Panc1 (cell line): ENCODE measurements at regions of chr1 and their contacts with region 1.

Region 1: GRCh38 chr1:242426271-242426905 is 98.1 kb downstream of the PLD5 start:
- DNase-seq: no peak
- ATAC-seq: no peak
- H3K4me3 ChIP-seq: no peak overlapping the region
- H3K27ac ChIP-seq: no peak overlapping the region
- H3K4me1 ChIP-seq: no peaks in the 10 kb centered on the region
- H3K27me3 ChIP-seq: no peaks in the 10 kb centered on the region
- CTCF ChIP-seq: peak; percentile 29; the same call in 1 of the 2 replicates

Region 2: DNA sequence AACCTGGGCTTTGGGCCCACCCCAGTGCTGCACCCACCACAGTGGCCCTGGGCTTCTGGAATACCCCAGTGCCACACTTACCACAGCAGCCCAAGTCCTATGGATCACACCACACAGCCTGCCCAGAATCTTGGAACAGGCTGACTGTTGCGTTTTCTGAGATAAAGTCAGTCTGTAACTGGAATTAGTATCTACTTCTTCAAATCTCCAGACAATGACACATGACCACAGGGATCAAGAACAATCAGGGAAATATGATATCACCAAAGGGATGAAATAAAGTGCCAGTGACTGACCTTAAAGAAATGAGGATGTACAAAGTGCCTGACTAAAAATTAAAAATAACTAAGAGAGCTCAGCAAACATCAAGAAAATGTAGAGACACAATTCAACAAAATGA is 337.8 kb after region 1 on chr1:
- CTCF ChIA-PET with region 1: no interaction called
- POLR2A ChIA-PET with region 1: interaction called, 10 read pairs
- in situ Hi-C with region 1: no loop called
- intact Hi-C with region 1: no loop called
- DNase-seq: no peak
- ATAC-seq: no peak
- H3K4me3 ChIP-seq: no peak overlapping the region
- H3K27ac ChIP-seq: no peak overlapping the region
- H3K4me1 ChIP-seq: no peaks in the 10 kb centered on the region
- H3K27me3 ChIP-seq: no peaks in the 10 kb centered on the region
- CTCF ChIP-seq: no peak